CD14-positive monocyte (primary cell): ENCODE measurements at regions of chr9 and their contacts with region 1.

Region 1: DNA sequence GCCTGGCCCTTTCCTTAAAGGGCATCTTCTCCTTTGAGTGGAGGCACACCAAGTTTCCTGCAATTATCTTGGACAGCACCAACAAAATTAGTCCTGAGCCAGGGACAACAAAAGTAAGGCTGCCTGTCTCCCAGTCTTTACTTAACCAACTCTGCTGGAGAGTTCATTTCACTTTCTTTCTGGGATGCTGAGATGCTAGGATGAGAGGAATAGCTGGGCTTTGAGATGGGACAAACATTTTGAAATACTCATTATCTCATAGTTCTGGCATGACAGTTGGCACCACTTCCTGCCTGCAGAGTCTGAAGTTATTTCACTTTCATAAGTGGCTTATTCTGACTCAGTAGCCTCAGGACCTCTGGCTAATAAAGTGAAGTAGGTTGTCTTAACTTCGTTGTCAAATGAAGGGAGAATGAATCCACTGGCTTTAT is 157.0 kb downstream of the C9orf152 start:
- DNase-seq: peak; percentile 51 to 80 (median 72)
- H3K4me3 ChIP-seq: no peak overlapping the region
- H3K4me3 Mint-ChIP-seq: peak overlapping the region in 1 of 2 donors; percentile 55
- H3K27ac ChIP-seq: no peak overlapping the region
- H3K27ac Mint-ChIP-seq: peak overlapping the region in 4 of 7 donors; percentile 40 to 83 (median 60)
- H3K4me1 ChIP-seq: peaks cover 36 to 46% of the 10 kb centered on the region in 2 donors
- H3K4me1 Mint-ChIP-seq: peaks cover 46% of the 10 kb centered on the region
- H3K27me3 ChIP-seq: peaks cover 8 to 18% of the 10 kb centered on the region in 2 donors
- H3K27me3 Mint-ChIP-seq: peaks cover 21 to 31% (median 22%) of the 10 kb centered on the region in 3 donors
- CTCF ChIP-seq: no peak

Region 2: DNA sequence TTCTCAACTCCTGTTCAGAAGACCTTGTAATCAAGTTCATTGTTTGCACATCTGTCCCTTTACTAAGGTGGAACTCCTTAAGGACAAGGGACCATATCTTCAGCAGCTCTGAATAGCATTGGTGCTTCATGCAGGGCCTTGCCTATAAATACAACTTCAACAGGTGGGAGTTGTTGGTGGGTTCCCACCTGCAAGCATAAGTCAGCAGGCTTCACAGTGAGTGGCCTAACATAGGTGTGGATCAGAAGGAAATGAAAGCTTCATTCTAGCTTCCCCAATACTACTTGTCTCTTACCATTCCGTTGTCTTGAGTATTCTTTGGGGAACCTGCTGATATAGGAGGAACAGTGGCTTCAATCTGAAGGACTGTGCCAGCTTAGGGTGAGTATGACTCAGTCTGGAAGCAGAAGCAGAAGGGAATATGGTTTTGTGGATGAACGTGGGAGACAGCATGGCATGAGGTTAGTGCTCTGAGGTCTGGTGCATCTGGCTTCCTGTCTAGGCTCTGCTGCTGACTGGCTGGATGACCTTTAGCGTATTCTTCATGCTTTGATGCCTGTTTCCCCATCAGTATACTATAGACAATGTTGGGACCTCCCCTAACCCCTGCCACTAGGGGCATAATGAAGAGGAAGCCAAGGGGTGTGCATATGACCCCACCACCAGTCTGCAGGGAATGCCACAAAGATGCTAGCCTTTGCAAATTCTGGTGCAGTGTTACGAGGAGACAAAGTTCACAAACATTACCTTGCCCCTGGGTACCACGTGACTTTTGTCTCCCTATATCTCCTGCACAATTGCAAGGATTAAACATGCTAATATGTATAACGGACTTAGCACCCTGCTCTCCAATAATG is 78.7 kb before region 1 on chr9:
- intact Hi-C with region 1: loop called in 1 of 2 experiments (anchors 5 kb)
- DNase-seq: peak; percentile 67 to 89 (median 80)
- H3K4me3 ChIP-seq: no peak overlapping the region
- H3K4me3 Mint-ChIP-seq: no peak overlapping the region
- H3K27ac ChIP-seq: peak overlapping the region in 1 of 2 donors; percentile 24
- H3K27ac Mint-ChIP-seq: peak overlapping the region in 5 of 7 donors; percentile 7 to 77 (median 39)
- H3K4me1 ChIP-seq: peaks cover 54 to 61% of the 10 kb centered on the region in 2 donors
- H3K4me1 Mint-ChIP-seq: peaks cover 64% of the 10 kb centered on the region
- H3K27me3 ChIP-seq: peaks cover 0 to 2% of the 10 kb centered on the region in 2 donors
- H3K27me3 Mint-ChIP-seq: peaks cover 0 to 5% (median 0%) of the 10 kb centered on the region in 3 donors
- CTCF ChIP-seq: peak; percentile 32

Region 3: GRCh38 chr9:110152704-110153374 is 101.9 kb after region 1 on chr9:
- intact Hi-C with region 1: loop called in 1 of 2 experiments (anchors 5 kb)
- DNase-seq: peak; percentile 18 to 60 (median 56)
- H3K4me3 ChIP-seq: no peak overlapping the region
- H3K4me3 Mint-ChIP-seq: no peak overlapping the region
- H3K27ac ChIP-seq: peak overlapping the region in 1 of 2 donors; percentile 26
- H3K27ac Mint-ChIP-seq: peak overlapping the region in 2 of 7 donors; percentile 82 to 85
- H3K4me1 ChIP-seq: peaks cover 49 to 52% of the 10 kb centered on the region in 2 donors
- H3K4me1 Mint-ChIP-seq: peaks cover 66% of the 10 kb centered on the region
- H3K27me3 ChIP-seq: no peaks in the 10 kb centered on the region
- H3K27me3 Mint-ChIP-seq: peaks cover 0 to 3% (median 1%) of the 10 kb centered on the region in 3 donors
- CTCF ChIP-seq: peak; percentile 92